Lower leg skin (tissue), 4 donors: ENCODE measurements at regions of chr6 and their contacts with region 1.

Region 1: GRCh38 chr6:166369782-166370181 is 13.0 kb downstream of the MPC1 start:
- DNase-seq: no peak
- H3K4me3 ChIP-seq: no peak overlapping the region
- CTCF ChIP-seq: no peak
- POLR2A ChIP-seq: no peak

Region 2: GRCh38 chr6:166313255-166314070 is 56.3 kb before region 1 on chr6:
- intact Hi-C with region 1: no loop called
- DNase-seq: peak in 1 of 2 donors; percentile 78
- H3K4me3 ChIP-seq: no peak overlapping the region
- CTCF ChIP-seq: no peak
- POLR2A ChIP-seq: no peak

Region 3: GRCh38 chr6:167811442-167812087 is 1441.8 kb after region 1 on chr6:
- intact Hi-C with region 1: loop called (anchors 5 kb)
- DNase-seq: no peak
- H3K4me3 ChIP-seq: no peak overlapping the region
- CTCF ChIP-seq: no peak
- POLR2A ChIP-seq: no peak